ENCODE measurements at regions of chr9 and their contacts with region 1.

Region 1: GRCh38 chr9:31119882-31120454 is 1264.5 kb upstream of the ACO1 start:
- DNase-seq: peak; percentile 52
- ATAC-seq: peak; percentile 33
- H3K4me3 ChIP-seq: no peak overlapping the region
- H3K4me3 Mint-ChIP-seq: no peak overlapping the region
- H3K27ac ChIP-seq: no peak overlapping the region
- H3K27ac Mint-ChIP-seq: no peak overlapping the region
- H3K4me1 ChIP-seq: no peaks in the 10 kb centered on the region
- H3K4me1 Mint-ChIP-seq: no peaks in the 10 kb centered on the region
- H3K27me3 ChIP-seq: no peaks in the 10 kb centered on the region
- H3K27me3 Mint-ChIP-seq: no peaks in the 10 kb centered on the region
- CTCF ChIP-seq: peak; percentile 60

Region 2: DNA sequence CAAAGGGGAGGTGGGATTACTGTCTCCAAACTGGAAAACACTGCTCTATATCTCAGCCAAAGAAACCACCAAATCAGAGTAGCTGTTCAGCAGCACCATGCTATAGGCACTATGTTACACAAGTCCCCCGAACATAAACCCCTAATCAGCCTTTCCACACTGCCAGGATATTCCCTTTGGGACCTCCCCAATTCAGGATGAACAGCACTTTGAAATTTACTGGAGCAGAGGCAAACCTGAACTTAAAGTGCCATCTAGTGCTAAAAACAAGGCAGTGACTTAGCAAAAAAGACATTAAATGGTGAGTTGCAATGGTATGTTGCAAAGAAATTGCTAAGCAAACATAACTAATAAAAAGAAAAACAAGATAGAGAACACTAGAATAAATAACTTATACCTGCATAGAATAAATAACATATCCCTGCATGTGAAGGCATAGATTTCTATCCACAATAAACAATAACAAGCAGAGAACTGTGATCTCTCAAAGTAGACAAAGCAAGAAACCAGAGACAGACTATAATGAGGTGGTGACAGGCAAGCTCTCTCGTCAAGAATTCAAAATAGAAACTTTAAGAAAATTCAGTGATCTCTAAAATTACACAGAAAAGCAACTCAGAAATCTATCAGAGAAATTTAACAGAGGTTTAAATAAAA is 680.1 kb after region 1 on chr9:
- CTCF ChIA-PET with region 1: interaction called, 7 read pairs
- POLR2A ChIA-PET with region 1: no interaction called
- intact Hi-C with region 1: loop called (anchors 2 kb)
- DNase-seq: peak; percentile 15
- ATAC-seq: no peak
- H3K4me3 ChIP-seq: no peak overlapping the region
- H3K4me3 Mint-ChIP-seq: no peak overlapping the region
- H3K27ac ChIP-seq: no peak overlapping the region
- H3K27ac Mint-ChIP-seq: no peak overlapping the region
- H3K4me1 ChIP-seq: no peaks in the 10 kb centered on the region
- H3K4me1 Mint-ChIP-seq: no peaks in the 10 kb centered on the region
- H3K27me3 ChIP-seq: no peaks in the 10 kb centered on the region
- H3K27me3 Mint-ChIP-seq: no peaks in the 10 kb centered on the region
- CTCF ChIP-seq: peak; percentile 29